SK-N-SH (cell line): ENCODE measurements at regions of chr20 and their contacts with region 1.

Region 1: DNA sequence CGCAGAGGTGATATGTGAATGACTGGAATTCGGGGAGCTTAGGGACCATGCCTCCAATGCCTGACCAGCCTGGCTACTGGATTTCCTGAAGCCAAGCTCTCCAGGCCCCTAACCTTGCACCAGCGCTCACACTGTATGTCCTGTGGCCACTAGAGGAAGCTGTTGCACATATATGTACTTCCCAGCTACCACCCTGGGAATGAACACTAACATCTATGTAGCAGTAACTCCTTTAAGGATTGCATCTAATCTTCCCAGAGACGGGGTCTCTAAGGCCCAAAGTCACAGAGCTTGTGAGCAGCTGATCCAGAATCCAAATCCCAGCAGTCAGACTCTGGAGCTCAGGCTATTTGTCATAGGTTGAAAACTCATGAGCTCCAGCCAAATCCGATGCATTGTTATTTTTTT is 20.4 kb upstream of the BPIFB1 start:
- DNase-seq: peak; percentile 52
- H3K4me3 ChIP-seq: no peak overlapping the region; a peak in 1 of 4 replicates
- H3K27ac ChIP-seq: no peak overlapping the region
- H3K4me1 ChIP-seq: no peaks in the 10 kb centered on the region
- H3K27me3 ChIP-seq: peaks cover 13% of the 10 kb centered on the region; the same call in 1 of the 2 replicates
- CTCF ChIP-seq: peak; percentile 65
- EP300 ChIP-seq: no peak
- RAD21 ChIP-seq: peak; percentile 77

Region 2: GRCh38 chr20:33250666-33251065 is 12.0 kb before region 1 on chr20:
- CTCF ChIA-PET with region 1: interaction called, 13 read pairs
- POLR2A ChIA-PET with region 1: no interaction called
- DNase-seq: no peak
- H3K4me3 ChIP-seq: no peak overlapping the region
- H3K27ac ChIP-seq: no peak overlapping the region
- H3K4me1 ChIP-seq: no peaks in the 10 kb centered on the region
- H3K27me3 ChIP-seq: no peaks in the 10 kb centered on the region
- CTCF ChIP-seq: no peak
- EP300 ChIP-seq: no peak
- RAD21 ChIP-seq: no peak

Region 3: GRCh38 chr20:33277471-33278441 is 15.1 kb after region 1 on chr20:
- CTCF ChIA-PET with region 1: interaction called, 29 read pairs
- POLR2A ChIA-PET with region 1: no interaction called
- DNase-seq: no peak
- H3K4me3 ChIP-seq: no peak overlapping the region
- H3K27ac ChIP-seq: no peak overlapping the region
- H3K4me1 ChIP-seq: peaks cover 0 to 12% of the 10 kb centered on the region in 2 experiments; a peak in 1 of 4 replicates
- H3K27me3 ChIP-seq: no peaks in the 10 kb centered on the region; the same call in 1 of the 2 replicates
- CTCF ChIP-seq: no peak
- EP300 ChIP-seq: no peak
- RAD21 ChIP-seq: no peak

Region 4: DNA sequence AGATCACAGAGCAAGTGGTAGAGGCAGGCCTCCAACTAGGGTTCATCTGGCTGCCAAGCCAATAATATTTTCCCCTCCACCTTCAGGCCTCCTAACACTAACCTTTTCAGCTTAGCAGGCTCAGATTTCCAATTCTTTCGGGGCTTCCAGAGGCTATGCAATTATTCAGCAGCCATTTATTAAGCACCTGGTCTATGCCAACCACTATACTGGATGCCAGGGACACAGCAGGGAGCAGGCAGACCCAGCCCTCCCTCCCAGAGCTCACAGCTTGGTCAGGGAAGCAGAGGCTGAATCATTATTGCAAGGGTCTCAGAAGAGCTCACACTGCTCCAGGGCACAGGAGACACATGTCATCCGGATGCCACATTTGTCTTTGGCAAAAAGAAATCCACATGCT is 21.6 kb after region 1 on chr20:
- CTCF ChIA-PET with region 1: interaction called, 18 read pairs
- POLR2A ChIA-PET with region 1: no interaction called
- DNase-seq: peak; percentile 52
- H3K4me3 ChIP-seq: no peak overlapping the region
- H3K27ac ChIP-seq: no peak overlapping the region
- H3K4me1 ChIP-seq: peaks cover 0 to 6% of the 10 kb centered on the region in 2 experiments; a peak in 1 of 4 replicates
- H3K27me3 ChIP-seq: no peaks in the 10 kb centered on the region; the same call in 1 of the 2 replicates
- CTCF ChIP-seq: no peak
- EP300 ChIP-seq: no peak
- RAD21 ChIP-seq: no peak

Region 5: GRCh38 chr20:33351696-33352095 is 89.0 kb after region 1 on chr20:
- CTCF ChIA-PET with region 1: no interaction called
- POLR2A ChIA-PET with region 1: no interaction called
- DNase-seq: no peak
- H3K4me3 ChIP-seq: no peak overlapping the region
- H3K27ac ChIP-seq: no peak overlapping the region
- H3K4me1 ChIP-seq: no peaks in the 10 kb centered on the region
- H3K27me3 ChIP-seq: no peaks in the 10 kb centered on the region
- CTCF ChIP-seq: no peak
- EP300 ChIP-seq: no peak
- RAD21 ChIP-seq: no peak

Region 6: DNA sequence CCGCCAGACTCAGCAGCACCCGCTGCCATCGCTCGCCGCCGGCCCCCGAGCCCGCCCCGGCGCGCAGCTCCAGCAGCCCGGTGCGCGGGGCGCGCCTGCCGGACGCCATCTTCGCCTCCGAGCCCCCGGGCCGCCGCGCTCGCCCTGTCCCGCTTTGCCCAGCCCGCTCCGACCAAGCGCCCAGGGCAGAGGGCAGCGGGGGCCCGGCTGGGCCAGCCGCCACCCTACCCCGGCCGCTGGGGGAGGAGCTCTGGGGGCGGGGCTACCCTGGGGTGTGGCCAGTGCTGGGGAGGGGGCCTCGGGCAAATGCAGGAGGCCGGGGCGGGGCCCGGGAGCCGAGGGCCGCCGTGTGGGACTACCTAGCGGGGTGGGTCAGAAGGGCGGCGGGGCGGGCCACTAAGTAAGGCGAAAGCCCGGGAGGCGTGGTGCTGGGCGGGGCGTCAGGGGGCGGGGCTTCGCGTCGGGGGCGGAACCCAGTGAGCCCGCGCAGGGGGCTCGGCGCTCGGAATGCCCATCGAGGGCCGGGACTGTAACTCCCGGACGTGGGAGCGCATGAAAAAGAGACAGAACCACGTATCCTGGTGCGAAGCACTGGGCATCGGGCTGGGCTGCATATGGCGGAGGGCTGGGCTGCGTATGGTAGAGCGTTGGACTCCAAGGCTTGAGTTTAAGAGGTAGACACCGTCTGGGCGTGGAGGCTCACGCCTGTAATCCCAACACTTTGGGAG is 181.0 kb after region 1 on chr20 and contains the start of gene SNTA1:
- CTCF ChIA-PET with region 1: no interaction called
- POLR2A ChIA-PET with region 1: no interaction called
- DNase-seq: peak; percentile 99
- H3K4me3 ChIP-seq: peak within 1 kb of the TSS; percentile 60 to 79
- H3K27ac ChIP-seq: peak within 1 kb of the TSS; percentile 11 to 39; a peak in 2 of 4 replicates
- H3K4me1 ChIP-seq: peaks cover 0 to 13% of the 10 kb centered on the region in 2 experiments; a peak in 1 of 4 replicates
- H3K27me3 ChIP-seq: no peaks in the 10 kb centered on the region
- CTCF ChIP-seq: no peak
- EP300 ChIP-seq: no peak
- RAD21 ChIP-seq: no peak
- polyA plus RNA-seq, gene SNTA1: 11.2 TPM in 2 replicates